ENCODE measurements at regions of chr10 and their contacts with region 1.

Region 1: DNA sequence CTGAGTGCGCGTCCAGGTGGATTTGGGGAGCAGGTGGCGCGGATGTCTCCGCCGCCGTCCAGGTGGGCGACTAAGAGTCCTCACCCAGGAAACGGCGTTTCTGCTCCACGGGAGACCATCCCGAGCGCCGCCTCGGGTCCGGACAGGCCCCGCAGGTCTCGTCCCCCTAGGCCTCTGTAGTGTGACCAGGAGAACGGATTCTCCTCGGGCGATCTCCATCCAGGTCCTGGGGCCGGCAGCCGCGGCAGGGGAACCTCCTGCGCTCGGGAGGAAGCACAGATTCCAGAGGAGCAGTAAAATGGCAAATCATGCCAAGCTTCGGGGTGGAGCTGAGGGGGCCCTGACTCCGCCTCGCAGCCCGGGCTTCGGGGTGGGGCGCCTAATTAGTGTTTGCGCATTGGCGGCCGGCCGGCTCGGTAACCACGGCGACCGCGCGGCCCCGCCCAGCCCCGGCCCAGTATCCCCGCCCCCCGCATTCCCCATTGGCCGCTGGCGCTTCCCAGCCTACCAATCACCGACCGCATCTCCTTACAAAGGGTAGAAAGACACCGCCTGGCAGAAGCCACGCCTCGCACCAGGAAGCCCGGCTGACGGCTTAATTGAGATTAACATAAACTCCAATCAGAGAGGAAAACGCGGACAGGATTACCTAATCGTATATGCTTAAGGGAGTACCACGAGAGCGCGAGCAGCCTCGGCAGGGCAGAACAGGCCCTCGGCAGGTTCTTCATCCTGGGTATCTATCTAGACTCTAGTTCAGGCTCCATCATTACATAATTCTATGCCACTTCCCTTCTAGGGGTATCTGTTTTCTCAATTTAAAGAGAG is 168.6 kb downstream of the ARHGAP12 start:
- DNase-seq: peak; percentile 99
- H3K4me3 ChIP-seq: peak overlapping the region; percentile 56 to 96 (median 80)
- H3K27ac ChIP-seq: peak overlapping the region; percentile 93 to 99 (median 94)
- H3K4me1 ChIP-seq: peaks cover 0 to 49% (median 36%) of the 10 kb centered on the region in 4 donors
- H3K27me3 ChIP-seq: no peaks in the 10 kb centered on the region
- CTCF ChIP-seq: no peak
- EP300 ChIP-seq: no peak
- POLR2A ChIP-seq: peak; percentile 91 to 92

Region 2: DNA sequence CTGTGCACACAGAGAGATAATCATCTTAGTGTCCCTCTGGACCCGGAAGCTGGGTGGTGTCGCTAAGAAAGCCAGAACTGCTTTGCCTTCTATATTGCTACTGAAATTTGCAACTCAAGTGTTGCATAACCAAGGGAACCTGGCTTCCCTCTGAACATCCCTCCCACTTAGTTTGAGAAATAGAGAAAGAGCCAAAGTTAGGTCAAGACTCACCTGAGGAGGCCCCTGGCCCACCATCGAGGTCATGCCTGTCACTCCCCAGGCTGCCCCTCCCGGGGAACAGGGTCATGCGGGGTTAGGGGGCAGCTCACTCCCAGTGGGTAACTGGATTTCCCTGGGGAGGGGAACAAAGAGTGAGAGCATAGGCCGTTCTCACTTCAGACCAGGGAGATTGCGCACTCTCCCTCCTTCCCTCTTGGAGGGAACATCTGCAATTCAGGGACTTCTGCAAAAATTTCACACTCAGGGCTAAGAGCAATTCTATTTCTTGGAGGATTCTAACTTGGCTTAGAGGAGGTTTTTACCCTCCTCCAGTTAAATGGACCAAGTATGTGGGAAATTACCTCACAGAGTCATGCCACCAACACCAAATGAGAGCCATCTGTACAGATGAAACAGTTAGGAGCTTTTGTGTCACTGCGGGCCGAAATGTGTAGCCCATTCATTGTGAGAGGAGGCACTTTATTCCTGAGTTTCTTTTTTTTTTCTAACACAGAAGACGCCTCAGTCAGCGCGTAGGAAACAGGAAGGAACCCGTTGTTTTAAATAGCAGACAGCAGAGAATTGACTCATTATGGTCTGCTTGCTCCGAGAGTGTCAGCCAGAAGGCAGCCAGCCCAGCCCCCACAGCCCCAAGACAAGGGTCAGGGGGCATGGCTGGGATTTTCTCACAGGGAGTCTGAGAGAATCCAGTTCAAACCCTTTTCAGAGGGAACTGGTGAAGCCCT is 52.6 kb before region 1 on chr10:
- intact Hi-C with region 1: loop called (anchors 10 kb)
- DNase-seq: peak; percentile 80
- H3K4me3 ChIP-seq: peak overlapping the region in 3 of 4 donors; percentile 6 to 15 (median 11)
- H3K27ac ChIP-seq: peak overlapping the region; percentile 71 to 82 (median 76)
- H3K4me1 ChIP-seq: peaks cover 0 to 63% (median 44%) of the 10 kb centered on the region in 4 donors
- H3K27me3 ChIP-seq: no peaks in the 10 kb centered on the region
- CTCF ChIP-seq: no peak
- EP300 ChIP-seq: no peak
- POLR2A ChIP-seq: no peak

Region 3: GRCh38 chr10:31723106-31723750 is 36.8 kb before region 1 on chr10:
- intact Hi-C with region 1: no loop called
- DNase-seq: no peak
- H3K4me3 ChIP-seq: no peak overlapping the region
- H3K27ac ChIP-seq: no peak overlapping the region
- H3K4me1 ChIP-seq: peaks cover 0 to 7% (median 0%) of the 10 kb centered on the region in 4 donors
- H3K27me3 ChIP-seq: no peaks in the 10 kb centered on the region
- CTCF ChIP-seq: no peak
- EP300 ChIP-seq: no peak
- POLR2A ChIP-seq: no peak

Measured in sigmoid colon (tissue), 7 donors.